ENCODE measurements at regions of chr7 and their contacts with region 1.

Region 1: DNA sequence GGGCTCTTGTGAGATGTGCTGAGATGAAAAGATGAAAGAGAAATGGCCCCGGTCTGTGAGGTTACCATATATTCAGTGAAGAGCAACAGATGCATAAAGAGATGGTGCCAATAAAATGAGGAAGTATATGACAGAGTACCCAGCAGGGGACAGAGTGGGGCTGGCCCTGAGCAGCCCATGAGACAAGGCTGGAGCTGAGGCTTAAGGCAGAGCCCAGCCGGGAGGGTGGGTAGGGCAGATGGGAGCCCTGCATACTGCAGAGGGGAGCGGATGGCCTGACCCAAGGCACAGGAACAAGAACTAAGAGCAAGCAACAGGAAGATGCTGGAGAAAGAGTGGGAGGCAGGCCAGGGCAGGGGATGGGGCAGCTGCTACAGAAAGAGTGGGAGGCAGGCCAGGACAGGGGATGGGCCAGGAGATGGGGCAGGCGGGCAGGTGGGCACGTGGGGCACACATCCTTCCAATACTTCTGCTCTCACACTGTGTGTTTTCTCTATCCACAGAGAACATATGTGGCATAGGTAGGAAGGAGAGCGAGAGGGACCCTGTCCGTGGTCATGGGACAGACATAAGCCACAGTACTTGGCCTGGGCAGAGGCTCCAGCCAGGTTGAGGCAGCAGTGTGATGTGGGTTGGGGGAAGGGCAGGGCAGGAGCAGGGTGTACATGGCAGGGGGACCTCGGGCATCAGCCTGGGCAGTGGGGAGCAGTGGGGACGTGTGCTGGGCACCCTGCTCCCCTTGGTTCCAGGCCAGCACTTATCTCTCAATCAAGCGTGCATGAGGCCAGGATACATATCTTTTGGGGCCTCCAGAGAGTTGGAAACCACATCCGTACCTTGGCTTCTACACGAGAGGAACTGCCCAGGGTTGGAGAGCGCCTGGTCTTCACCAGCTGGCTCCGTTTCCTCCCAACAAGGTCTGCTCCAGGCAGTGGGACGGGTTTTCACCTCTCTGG is 91.6 kb upstream of the IKZF1 start:
- DNase-seq: peak; percentile 92

Region 2: DNA sequence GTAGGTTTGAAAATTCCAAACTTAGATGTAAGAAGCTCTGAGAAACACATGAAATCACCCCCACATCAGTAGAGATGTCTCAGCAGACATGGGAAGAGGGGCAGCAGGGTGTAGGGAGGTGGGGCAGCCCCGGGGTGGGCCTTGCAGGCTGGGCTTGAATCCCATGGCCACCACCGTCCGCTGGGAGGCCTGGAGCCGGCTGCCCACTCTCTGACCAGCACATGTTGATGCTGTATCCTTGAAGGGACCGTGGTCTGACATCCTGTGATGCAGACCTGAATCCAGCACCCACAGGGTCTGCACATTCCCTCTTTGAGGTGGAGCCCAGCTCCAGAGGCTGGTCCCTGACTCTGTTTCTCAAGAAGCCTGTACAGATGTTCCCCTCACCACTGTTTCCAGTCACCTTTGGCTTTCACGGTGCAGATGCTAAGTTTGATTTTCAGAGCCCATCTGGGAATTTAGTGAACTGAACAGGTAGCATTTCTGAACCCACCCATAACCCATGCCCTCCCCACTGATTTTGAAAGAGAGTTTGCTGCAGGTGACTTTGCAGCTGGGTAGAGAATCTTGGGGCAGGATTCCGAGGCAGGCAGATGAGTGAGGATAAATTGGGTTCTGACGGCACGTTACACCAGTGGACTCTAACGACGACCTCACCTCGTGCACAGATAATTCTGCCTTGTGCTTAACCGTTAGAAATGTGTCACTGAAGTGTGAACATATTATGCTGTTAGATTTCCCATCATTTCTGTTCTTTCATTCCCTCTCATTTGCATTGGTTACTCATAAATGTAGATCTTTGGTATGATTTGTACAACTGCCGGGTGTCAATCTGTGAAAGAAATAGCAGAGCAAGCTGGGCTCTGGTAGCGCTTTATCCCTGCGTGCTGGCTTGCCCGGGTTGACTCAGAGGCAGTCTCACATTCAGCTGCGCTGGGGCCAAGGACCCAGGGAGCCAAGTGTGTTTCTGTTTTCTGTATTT is 137.3 kb after region 1 on chr7:
- in situ Hi-C with region 1: loop called (anchors 10 kb)
- DNase-seq: no peak